Breast epithelium (tissue), 4 donors: ENCODE measurements at regions of chr6 and their contacts with region 1.

Region 1: DNA sequence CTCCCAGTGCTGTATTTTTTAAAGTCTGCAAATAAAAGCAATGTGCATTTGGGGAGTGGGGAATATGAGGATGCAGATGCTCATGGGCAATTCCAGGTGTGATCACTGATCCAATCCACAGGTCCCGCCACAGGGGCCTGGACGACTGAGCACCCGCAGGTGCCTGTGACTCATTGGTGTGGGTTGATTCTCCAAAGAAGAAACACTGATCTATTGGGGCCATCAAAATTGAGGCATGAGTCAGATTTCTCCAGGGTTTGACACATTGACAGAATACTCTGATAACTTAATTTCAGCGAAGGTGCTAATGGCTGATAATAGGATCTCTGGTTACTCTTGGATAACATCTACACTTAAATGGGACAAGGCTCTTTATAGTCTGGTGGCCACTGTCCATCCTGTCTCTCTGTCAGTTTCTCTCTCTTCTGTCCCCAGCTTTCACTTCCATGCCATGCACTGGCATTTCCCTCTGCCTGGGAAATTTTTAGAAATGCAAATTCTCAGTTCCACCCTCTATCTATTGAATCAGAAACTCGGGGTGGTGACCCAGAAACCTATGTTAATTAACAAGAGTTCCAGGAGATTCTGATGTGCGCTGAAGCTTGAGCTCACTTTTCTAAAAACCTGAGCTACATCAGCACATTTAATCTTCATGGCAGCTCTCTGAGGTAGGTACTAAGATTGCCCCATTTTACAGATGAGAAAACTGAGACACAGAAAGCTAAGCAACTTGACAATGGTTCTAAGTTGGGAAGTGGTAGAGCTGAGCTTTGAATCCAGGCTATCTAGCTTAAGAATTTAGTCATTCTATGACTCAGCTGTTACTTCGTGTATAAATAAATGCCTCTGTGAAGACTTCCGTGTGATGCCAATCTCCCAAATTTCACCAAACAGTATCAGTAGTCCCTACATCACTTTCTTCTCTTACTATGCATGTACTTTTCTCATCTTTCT is 10.2 kb upstream of the RCAN2 start:
- DNase-seq: no peak
- H3K4me3 ChIP-seq: no peak overlapping the region
- H3K27ac ChIP-seq: no peak overlapping the region
- H3K4me1 ChIP-seq: no peaks in the 10 kb centered on the region
- H3K27me3 ChIP-seq: no peaks in the 10 kb centered on the region
- CTCF ChIP-seq: no peak
- POLR2A ChIP-seq: no peak

Region 2: DNA sequence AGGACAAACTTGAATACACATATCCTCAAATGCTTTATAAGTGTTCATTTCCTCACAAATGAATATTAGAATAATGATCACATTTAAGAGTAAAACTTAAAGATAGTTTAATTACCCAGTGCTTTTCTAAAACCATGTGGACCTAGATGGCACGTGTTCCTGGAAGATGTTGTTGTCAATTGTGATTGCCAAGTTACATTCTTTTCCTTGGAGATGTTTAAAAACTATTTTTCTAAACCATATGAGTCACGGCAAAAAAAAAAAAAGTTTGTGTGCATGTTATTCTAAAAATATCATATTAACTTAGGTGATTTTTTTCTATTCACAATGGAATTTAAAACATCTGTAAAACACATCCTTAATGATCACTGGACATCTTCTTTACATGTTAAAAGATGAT is 61.3 kb before region 1 on chr6:
- intact Hi-C with region 1: loop called (anchors 5 kb)
- DNase-seq: no peak
- H3K4me3 ChIP-seq: no peak overlapping the region
- H3K27ac ChIP-seq: no peak overlapping the region
- H3K4me1 ChIP-seq: no peaks in the 10 kb centered on the region
- H3K27me3 ChIP-seq: no peaks in the 10 kb centered on the region
- CTCF ChIP-seq: no peak
- POLR2A ChIP-seq: no peak

Region 3: DNA sequence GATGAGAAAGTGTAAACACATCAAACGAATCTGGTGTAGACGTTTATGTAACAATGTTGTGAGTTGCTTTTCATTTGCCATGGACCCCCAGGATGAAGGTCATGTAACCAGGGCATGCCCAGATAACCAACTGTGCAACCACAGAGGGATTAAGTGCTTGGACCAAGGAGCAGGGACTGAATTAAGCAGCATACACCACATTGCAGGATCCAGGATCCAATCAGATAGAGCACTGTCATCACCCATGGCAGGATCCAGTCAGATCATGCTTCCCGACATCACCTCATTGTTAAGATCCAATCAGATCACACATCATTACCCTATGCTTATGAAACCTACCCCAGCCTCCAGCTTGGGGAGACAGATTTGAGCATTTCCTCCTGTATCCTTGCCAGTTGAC is 64.1 kb after region 1 on chr6:
- intact Hi-C with region 1: no loop called
- DNase-seq: no peak
- H3K4me3 ChIP-seq: no peak overlapping the region
- H3K27ac ChIP-seq: no peak overlapping the region
- H3K4me1 ChIP-seq: no peaks in the 10 kb centered on the region
- H3K27me3 ChIP-seq: no peaks in the 10 kb centered on the region
- CTCF ChIP-seq: no peak
- POLR2A ChIP-seq: no peak

Region 4: DNA sequence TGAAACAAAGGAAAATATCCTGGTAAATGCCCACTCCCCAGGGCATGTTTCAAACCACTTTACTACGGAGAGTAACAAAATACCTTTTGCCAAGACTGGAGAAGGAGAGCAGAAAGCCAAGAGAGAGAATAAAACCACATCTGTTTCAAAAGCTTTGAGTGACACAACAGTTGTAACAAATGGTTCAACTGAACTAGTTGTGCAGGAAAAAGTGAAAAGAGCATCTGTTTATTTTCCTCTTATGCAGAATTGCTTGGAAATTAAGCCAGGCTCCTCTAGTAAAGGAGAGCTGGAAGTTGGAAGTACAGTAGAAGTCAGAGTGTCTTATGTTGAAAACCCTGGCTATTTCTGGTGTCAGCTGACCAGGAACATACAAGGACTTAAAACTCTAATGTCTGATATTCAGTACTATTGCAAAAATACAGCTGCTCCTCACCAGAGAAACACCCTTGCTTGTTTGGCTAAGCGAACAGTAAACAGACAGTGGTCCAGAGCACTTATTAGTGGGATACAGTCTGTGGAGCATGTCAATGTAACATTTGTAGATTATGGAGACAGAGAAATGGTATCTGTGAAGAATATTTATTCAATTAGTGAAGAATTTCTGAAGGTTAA is 188.8 kb after region 1 on chr6:
- intact Hi-C with region 1: no loop called
- DNase-seq: no peak
- H3K4me3 ChIP-seq: no peak overlapping the region
- H3K27ac ChIP-seq: no peak overlapping the region
- H3K4me1 ChIP-seq: no peaks in the 10 kb centered on the region
- H3K27me3 ChIP-seq: no peaks in the 10 kb centered on the region
- CTCF ChIP-seq: no peak
- POLR2A ChIP-seq: no peak